ENCODE measurements at regions of chr5 and their contacts with region 1.

Region 1: GRCh38 chr5:90898330-90899013 is 339.9 kb downstream of the ADGRV1 start:
- DNase-seq: no peak
- ATAC-seq: no peak
- H3K4me3 ChIP-seq: peak overlapping the region in 2 of 3 experiments; percentile 21 to 31; a peak in 3 of 6 replicates
- H3K27ac ChIP-seq: peak overlapping the region; percentile 82
- H3K4me1 ChIP-seq: peaks cover 65% of the 10 kb centered on the region
- H3K27me3 ChIP-seq: no peaks in the 10 kb centered on the region
- CTCF ChIP-seq: no peak
- EP300 ChIP-seq: no peak
- POLR2A ChIP-seq: no peak
- RAD21 ChIP-seq: no peak

Region 2: DNA sequence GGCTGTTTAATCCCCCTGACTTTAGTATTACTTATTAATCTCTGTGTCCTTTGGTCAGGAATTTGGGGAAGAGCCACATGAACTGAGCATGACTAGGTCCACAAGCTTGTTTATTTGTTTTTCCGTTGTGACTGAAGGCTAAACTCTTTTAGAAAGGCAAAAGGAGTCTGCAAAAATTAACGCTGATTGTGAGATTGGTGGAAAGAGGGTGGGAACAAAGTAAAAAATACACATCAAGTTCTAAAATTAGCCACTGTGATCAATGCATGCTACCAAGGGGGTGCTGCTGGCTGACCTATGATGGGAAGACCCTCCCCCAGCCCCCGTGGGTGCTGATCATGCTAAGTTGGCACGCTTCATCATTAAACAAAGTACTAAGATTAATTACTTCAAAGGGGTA is 16.9 kb after region 1 on chr5:
- CTCF ChIA-PET with region 1: no interaction called
- POLR2A ChIA-PET with region 1: no interaction called
- in situ Hi-C with region 1: no loop called
- intact Hi-C with region 1: loop called (anchors 2 kb)
- DNase-seq: peak; percentile 75
- ATAC-seq: peak; percentile 94
- H3K4me3 ChIP-seq: peak overlapping the region in 1 of 3 experiments; percentile 31; a peak in 1 of 6 replicates
- H3K27ac ChIP-seq: peak overlapping the region; percentile 72
- H3K4me1 ChIP-seq: peaks cover 58% of the 10 kb centered on the region
- H3K27me3 ChIP-seq: no peaks in the 10 kb centered on the region
- CTCF ChIP-seq: no peak
- EP300 ChIP-seq: peak in 1 of 2 experiments; percentile 91; a peak in 2 of 4 replicates
- POLR2A ChIP-seq: no peak
- RAD21 ChIP-seq: no peak

Region 3: GRCh38 chr5:91090995-91091394 is 192.5 kb after region 1 on chr5:
- CTCF ChIA-PET with region 1: no interaction called
- POLR2A ChIA-PET with region 1: no interaction called
- in situ Hi-C with region 1: no loop called
- intact Hi-C with region 1: no loop called
- DNase-seq: no peak
- ATAC-seq: no peak
- H3K4me3 ChIP-seq: no peak overlapping the region
- H3K27ac ChIP-seq: no peak overlapping the region
- H3K4me1 ChIP-seq: peaks cover 25% of the 10 kb centered on the region
- H3K27me3 ChIP-seq: no peaks in the 10 kb centered on the region; a peak in 1 of 5 replicates
- CTCF ChIP-seq: no peak
- EP300 ChIP-seq: no peak
- POLR2A ChIP-seq: no peak
- RAD21 ChIP-seq: no peak

Measured in HepG2 (cell line).